GM10248 (cell line): ENCODE measurements at regions of chr2 and their contacts with region 1.

Region 1: DNA sequence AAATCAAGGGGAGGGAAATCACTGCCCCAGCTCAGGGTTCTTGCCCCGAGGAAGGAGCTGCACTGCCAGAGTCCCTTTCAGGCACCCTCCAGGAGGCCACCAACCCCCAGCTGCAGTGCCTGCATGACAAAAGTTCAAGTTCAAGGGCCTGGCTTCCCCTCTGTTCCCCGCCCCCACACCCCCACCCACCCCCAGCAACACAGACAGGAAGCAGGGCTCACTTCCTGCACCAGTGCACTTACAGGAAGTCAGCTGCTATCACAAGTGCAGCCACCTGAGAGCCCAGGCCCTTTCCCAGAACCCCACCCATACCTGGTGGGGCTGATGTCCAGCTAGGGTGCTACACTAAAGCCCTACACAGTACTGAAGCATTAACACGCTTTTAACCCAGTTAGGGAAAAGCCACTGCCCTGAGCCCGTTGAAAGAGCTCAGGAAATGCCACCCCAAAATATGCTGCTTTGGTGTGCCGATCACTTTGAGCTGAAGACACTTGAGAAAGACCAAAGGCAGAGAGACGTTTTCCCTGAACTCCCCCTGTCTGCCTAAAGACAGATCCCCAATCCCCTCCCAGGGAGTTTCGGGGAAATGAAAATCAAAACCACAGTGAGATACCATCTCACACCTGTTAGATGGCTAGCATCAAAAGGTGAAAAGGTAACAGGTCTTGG is 109.9 kb upstream of the CAB39 start:
- DNase-seq: peak; percentile 75
- CTCF ChIP-seq: no peak

Region 2: DNA sequence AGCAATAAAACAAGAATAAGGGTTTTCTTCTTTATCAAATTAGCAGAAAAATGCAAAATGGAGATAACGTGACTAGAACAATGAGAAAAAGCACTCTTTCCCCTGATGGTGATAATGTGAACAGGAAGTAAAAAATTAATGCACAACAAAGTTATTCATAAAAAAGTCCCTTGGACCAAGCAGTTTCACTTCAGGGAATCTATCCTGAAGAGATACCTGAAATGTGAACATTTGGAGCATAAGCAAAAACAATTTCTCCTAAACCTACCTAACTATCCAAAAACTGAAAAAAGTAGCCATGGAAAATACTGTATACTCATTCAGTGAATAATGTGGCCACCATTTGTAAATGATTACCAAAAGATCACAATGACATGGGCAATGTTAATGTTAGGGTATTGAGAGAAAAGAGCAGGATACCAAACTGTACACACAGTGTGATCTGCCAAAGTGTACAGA is 729.5 kb before region 1 on chr2:
- CTCF ChIA-PET with region 1: no interaction called
- POLR2A ChIA-PET with region 1: no interaction called
- DNase-seq: peak; percentile 24
- CTCF ChIP-seq: no peak

Region 3: GRCh38 chr2:230564805-230565779 is 37.6 kb before region 1 on chr2:
- CTCF ChIA-PET with region 1: no interaction called
- POLR2A ChIA-PET with region 1: no interaction called
- DNase-seq: no peak
- CTCF ChIP-seq: no peak

Region 4: GRCh38 chr2:230614913-230615332 is 12.2 kb after region 1 on chr2:
- CTCF ChIA-PET with region 1: interaction called, 11 read pairs
- POLR2A ChIA-PET with region 1: no interaction called
- DNase-seq: peak; percentile 75
- CTCF ChIP-seq: no peak

Region 5: GRCh38 chr2:230658877-230659652 is 56.4 kb after region 1 on chr2:
- CTCF ChIA-PET with region 1: no interaction called
- POLR2A ChIA-PET with region 1: no interaction called
- DNase-seq: peak; percentile 77
- CTCF ChIP-seq: no peak